Left ventricle myocardium superior (tissue), 1 donor: ENCODE measurements at regions of chr3 and their contacts with region 1.

Region 1: DNA sequence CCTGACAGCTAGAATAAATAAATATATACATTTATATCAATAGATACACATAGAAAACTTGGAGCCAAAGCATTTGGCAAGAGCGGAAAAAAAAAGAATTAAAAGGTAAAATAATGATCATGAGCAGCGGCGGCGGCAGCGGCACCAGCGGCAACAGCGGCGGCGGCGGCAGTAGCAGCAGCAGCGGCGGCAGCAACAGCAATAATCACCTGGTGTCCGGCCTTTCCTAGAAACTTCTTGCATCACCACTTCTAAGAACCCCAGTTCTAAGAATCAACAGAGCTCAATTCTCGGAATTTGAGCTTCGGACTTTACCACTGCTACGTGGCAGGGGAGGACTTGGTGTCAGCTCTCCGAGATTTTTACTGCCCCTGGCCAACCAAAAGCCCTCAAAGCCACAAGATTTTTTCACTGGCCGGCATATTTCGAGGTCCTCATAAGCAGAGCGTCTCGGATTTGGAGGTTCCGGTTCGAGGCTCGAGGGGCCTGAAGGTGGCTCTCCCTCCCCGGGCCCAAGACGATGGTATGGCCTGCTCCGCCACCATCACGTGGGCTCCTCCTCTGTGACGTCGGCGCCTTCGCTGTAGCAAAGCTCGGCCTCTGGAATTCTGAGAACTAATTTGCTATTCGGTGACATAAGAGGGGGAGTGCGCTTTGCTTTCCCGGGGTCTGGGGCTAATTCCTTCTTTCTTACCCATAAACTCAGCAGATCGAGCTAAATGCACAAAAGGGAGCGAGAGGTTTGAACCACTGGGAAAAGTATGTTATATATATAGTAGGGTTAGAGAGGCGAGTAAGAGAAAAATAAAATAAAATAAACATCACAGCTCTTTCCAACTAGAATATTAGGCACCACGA is at the start of gene BCL6:
- DNase-seq: peak; percentile 94
- ATAC-seq: peak; percentile 69
- total RNA-seq, gene BCL6: 104 TPM

Region 2: DNA sequence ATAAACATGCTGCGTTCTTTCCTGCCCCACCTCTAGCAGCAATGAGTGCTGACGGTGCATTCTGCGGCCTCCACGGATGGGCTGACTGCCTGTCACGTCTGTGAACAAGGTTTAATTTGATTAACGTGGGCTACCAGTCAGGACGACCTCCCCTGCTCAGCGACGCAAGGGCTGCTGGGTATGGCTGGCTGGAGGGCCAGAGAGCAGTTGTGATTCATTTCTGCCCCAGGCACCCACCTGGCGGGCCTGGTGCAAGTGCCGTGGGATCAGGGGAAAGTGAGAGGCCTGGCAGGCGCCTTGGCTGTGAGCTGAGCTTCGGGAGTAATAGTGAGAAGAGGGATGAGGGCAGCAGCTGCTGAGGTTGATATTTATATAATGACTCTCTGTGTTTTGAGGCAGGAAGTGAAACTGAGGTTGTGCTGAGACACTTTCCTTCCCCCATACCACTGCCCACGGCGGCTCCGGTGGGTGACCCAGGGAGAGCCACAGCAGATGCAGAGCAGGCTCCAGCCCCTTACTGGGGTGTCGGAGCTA is 190.3 kb after region 1 on chr3:
- intact Hi-C with region 1: no loop called
- DNase-seq: no peak
- ATAC-seq: no peak

Region 3: GRCh38 chr3:188683032-188683521 is 937.6 kb after region 1 on chr3:
- intact Hi-C with region 1: no loop called
- DNase-seq: no peak
- ATAC-seq: peak; percentile 84

Region 4: GRCh38 chr3:189148081-189148507 is 1402.7 kb after region 1 on chr3:
- intact Hi-C with region 1: loop called (anchors 10 kb)
- DNase-seq: peak; percentile 43
- ATAC-seq: peak; percentile 81